ENCODE measurements at regions of chr12 and their contacts with region 1.

Region 1: GRCh38 chr12:132887513-132888351 is at the start of gene CHFR:
- DNase-seq: peak; percentile 88 to 92
- H3K4me3 ChIP-seq: peak within 1 kb of the TSS; percentile 95
- H3K27ac ChIP-seq: peak within 1 kb of the TSS; percentile 88
- H3K4me1 ChIP-seq: no peaks in the 10 kb centered on the region
- H3K27me3 ChIP-seq: 0 out of 2 replicates have a peak, but pooled peaks cover 3% of the 10 kb centered on the region
- CTCF ChIP-seq: no peak
- total RNA-seq, gene CHFR: 15.5 and 17.8 TPM in 2 replicates

Region 2: DNA sequence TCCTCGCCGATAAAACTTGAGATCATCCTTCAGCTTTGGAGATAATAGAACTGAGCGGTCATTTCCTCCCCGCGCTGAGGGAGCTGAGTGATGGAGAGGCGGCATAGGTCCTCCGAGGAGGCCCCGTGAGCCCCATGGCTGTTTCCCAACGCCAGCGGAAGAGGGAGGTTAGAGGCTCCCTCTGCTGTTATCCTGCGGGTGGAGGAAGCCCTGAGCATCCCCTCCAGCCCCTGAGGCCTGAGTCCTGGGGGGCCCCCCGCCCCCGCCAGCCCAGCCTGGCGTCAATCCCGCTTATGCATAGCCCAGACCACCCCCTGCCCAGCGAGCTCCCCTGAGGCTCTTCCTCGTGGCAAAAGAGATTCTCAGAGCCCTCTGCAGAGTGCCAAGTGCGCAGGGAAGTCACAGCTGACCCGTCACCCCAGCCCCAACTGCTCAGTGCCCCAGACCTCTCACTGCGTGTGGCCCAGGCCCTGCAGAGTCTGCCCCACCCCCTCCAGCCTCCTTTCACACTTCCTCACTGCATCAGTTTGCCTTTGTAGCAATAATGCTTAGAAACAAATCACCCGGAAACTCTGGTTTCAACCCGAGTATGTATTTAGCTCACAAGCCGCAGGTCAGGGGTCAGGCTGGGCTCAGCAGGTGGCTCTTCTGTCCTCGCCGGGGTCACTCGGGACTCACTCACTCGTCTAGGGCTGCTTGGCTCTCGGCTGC is 513.7 kb before region 1 on chr12:
- CTCF ChIA-PET with region 1: no interaction called
- POLR2A ChIA-PET with region 1: no interaction called
- intact Hi-C with region 1: no loop called
- DNase-seq: no peak
- H3K4me3 ChIP-seq: no peak overlapping the region
- H3K27ac ChIP-seq: no peak overlapping the region
- H3K4me1 ChIP-seq: no peaks in the 10 kb centered on the region
- H3K27me3 ChIP-seq: peaks cover 90% of the 10 kb centered on the region
- CTCF ChIP-seq: no peak

Region 3: GRCh38 chr12:132700212-132700822 is 187.4 kb before region 1 on chr12:
- CTCF ChIA-PET with region 1: no interaction called
- POLR2A ChIA-PET with region 1: no interaction called
- intact Hi-C with region 1: no loop called
- DNase-seq: peak in 1 of 2 experiments; percentile 48
- H3K4me3 ChIP-seq: no peak overlapping the region
- H3K27ac ChIP-seq: no peak overlapping the region
- H3K4me1 ChIP-seq: no peaks in the 10 kb centered on the region
- H3K27me3 ChIP-seq: no peaks in the 10 kb centered on the region
- CTCF ChIP-seq: no peak

Region 4: DNA sequence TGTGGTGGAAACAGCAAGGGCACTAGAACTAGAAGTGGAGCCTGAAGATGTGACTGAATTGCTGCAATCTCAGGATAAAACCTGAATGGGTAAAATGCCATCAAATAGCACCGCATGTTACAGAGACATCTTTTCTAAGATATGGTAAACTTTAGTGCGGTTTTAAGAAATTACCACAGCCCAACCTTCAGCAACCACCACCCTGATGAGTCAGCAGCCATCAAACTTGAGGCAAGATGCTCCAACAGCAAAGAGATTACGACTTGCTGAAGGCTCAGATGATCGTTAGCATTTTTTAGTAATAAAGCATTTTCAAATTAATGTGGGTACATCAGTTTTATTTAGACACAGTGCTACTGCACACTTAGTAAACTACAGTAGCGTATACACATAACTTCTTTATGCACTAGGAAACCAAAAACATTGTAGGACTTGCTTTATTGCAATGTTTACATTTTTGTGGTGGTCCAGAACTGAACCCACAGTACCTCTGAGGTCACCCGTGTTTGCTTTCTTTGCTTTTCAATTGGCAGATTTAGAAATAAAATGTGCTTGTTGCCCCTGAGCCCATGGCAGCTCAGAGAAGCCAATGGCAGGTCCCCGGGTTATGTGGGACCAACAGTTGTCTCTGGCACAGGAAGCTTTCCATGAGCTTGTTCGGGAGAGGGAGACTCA is 75.0 kb before region 1 on chr12:
- CTCF ChIA-PET with region 1: no interaction called
- POLR2A ChIA-PET with region 1: no interaction called
- intact Hi-C with region 1: no loop called
- DNase-seq: no peak
- H3K4me3 ChIP-seq: no peak overlapping the region
- H3K27ac ChIP-seq: no peak overlapping the region
- H3K4me1 ChIP-seq: no peaks in the 10 kb centered on the region
- H3K27me3 ChIP-seq: no peaks in the 10 kb centered on the region
- CTCF ChIP-seq: no peak

Region 5: DNA sequence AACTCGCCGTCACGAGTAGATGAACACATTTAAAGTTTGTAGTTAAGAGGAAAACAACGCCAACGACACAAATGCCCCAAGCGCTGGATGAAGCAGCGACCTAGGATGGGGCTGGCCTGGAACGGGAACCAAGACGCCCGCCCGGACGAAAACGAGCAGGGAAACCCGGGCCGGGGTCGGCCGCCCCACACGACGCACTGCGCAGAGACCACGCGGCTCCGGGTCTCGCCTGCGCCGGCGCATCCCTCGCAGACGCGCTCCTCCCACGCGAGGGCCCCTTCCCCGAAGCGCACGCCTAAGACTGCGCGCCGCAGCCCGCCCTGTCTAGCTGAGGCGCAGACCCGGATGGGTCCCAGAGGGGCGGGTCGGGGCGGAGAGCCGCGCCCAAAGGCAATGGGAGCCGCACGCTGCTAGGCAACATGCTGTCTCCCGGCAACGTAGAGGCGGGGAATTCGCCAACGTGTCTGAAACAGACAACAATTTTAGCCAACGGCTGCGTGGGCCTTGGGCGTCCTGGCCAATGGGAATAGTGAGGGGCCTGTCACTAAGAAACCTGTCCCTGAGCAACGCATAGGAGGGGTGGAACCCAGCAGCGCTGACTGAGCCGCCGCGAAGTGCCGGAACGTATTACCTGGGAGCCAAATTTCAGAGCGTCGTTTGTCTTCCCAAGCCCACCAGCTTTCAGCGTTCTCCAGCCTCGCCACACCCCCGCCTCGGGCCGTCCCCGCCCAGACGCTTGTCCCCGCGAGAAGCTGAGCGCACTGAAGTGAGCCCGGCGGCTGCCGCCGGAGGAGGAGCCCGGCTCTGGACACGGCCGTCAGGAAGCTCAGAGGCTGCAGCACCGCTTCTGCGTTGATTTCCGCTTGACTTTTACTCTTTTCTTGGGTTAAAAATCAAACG is 20.7 kb after region 1 on chr12:
- CTCF ChIA-PET with region 1: no interaction called
- POLR2A ChIA-PET with region 1: no interaction called
- intact Hi-C with region 1: loop called (anchors 2 kb)
- DNase-seq: peak; percentile 89 to 94
- H3K4me3 ChIP-seq: peak overlapping the region; percentile 70
- H3K27ac ChIP-seq: no peak overlapping the region
- H3K4me1 ChIP-seq: no peaks in the 10 kb centered on the region
- H3K27me3 ChIP-seq: no peaks in the 10 kb centered on the region
- CTCF ChIP-seq: no peak

Region 6: GRCh38 chr12:132949936-132950837 is 62.5 kb after region 1 on chr12:
- CTCF ChIA-PET with region 1: no interaction called
- POLR2A ChIA-PET with region 1: no interaction called
- intact Hi-C with region 1: no loop called
- DNase-seq: no peak
- H3K4me3 ChIP-seq: no peak overlapping the region
- H3K27ac ChIP-seq: no peak overlapping the region
- H3K4me1 ChIP-seq: no peaks in the 10 kb centered on the region
- H3K27me3 ChIP-seq: no peaks in the 10 kb centered on the region
- CTCF ChIP-seq: no peak